ENCODE measurements at regions of chr13 and their contacts with region 1.

Region 1: GRCh38 chr13:20197361-20197834 is 4.7 kb upstream of the GJB2 start:
- DNase-seq: peak; percentile 23
- H3K4me3 Mint-ChIP-seq: no peak overlapping the region
- H3K27ac Mint-ChIP-seq: no peak overlapping the region
- H3K4me1 Mint-ChIP-seq: peaks cover 13% of the 10 kb centered on the region
- H3K27me3 Mint-ChIP-seq: peaks cover 37% of the 10 kb centered on the region

Region 2: DNA sequence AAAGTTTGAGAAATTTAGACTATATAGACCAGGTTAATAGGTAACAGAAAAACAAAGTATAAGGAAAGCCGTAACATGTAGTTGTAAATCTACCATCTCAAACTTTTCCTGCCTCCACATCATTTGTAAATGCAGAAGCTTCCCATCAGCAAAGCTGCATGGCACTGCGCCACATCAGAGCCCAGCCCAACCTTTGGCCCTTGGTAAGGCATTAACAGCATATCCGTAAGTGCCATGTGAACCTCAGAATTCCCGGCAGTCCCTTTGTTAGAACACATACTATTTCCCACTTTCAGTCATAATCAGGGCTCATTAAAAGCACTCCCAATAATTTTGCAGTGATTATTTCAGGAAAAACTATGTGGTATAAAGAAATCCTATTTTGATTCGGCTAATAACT is 512.4 kb before region 1 on chr13:
- CTCF ChIA-PET with region 1: no interaction called
- intact Hi-C with region 1: no loop called
- DNase-seq: no peak
- H3K4me3 Mint-ChIP-seq: no peak overlapping the region
- H3K27ac Mint-ChIP-seq: no peak overlapping the region
- H3K4me1 Mint-ChIP-seq: peaks cover 24% of the 10 kb centered on the region
- H3K27me3 Mint-ChIP-seq: no peaks in the 10 kb centered on the region

Region 3: GRCh38 chr13:20219577-20219976 is 22.2 kb after region 1 on chr13:
- CTCF ChIA-PET with region 1: interaction called, 10 read pairs
- intact Hi-C with region 1: loop called (anchors 2 kb)
- DNase-seq: no peak
- H3K4me3 Mint-ChIP-seq: peak overlapping the region; percentile 2
- H3K27ac Mint-ChIP-seq: peak overlapping the region; percentile 5
- H3K4me1 Mint-ChIP-seq: peaks cover 17% of the 10 kb centered on the region
- H3K27me3 Mint-ChIP-seq: no peaks in the 10 kb centered on the region

Region 4: DNA sequence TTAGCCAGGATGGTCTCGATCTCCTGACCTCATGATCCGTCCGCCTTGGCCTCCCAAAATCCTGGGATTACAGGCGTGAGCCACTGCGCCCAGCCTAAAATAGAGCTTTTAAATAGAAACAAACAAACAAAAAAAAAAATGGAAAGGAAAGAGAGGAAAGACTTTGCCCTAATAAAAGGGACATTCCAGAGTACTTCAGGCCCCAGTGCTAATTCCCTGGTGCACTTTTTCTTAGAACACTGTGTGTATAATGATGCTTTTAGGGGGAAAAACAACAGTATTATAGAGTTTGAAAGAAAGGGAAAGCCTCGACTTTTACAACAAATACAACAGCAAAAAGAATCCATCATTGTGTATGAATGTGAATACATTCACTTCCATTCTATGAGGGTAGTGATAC is 223.5 kb after region 1 on chr13:
- CTCF ChIA-PET with region 1: interaction called, 7 read pairs
- intact Hi-C with region 1: loop called (anchors 2 kb)
- DNase-seq: no peak
- H3K4me3 Mint-ChIP-seq: no peak overlapping the region
- H3K27ac Mint-ChIP-seq: peak overlapping the region; percentile 59
- H3K4me1 Mint-ChIP-seq: peaks cover 35% of the 10 kb centered on the region
- H3K27me3 Mint-ChIP-seq: no peaks in the 10 kb centered on the region

Region 5: GRCh38 chr13:20489185-20489820 is 291.9 kb after region 1 on chr13:
- CTCF ChIA-PET with region 1: interaction called, 20 read pairs
- intact Hi-C with region 1: loop called (anchors 1 kb)
- DNase-seq: peak; percentile 30
- H3K4me3 Mint-ChIP-seq: no peak overlapping the region
- H3K27ac Mint-ChIP-seq: no peak overlapping the region
- H3K4me1 Mint-ChIP-seq: no peaks in the 10 kb centered on the region
- H3K27me3 Mint-ChIP-seq: no peaks in the 10 kb centered on the region

Region 6: DNA sequence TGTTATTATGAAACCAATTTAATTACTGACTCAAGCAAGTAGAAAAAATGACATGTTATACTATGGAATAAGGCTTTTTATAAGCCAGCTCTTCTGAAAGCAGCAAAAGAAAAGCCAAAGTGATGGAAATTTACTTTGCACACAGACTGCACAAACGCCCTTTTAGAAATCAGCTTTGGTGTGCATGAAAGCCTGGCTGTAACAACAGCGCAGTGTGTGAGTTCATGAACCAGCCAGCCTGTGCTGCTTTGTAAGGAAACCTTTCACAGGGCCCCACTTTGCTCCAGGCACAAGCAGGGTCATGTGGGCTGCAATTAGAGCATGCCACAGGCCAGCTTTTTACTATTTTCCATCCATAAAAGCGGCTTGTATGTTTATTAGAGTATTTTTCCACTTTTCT is 355.9 kb after region 1 on chr13:
- CTCF ChIA-PET with region 1: no interaction called
- intact Hi-C with region 1: no loop called
- DNase-seq: no peak
- H3K4me3 Mint-ChIP-seq: no peak overlapping the region
- H3K27ac Mint-ChIP-seq: no peak overlapping the region
- H3K4me1 Mint-ChIP-seq: no peaks in the 10 kb centered on the region
- H3K27me3 Mint-ChIP-seq: no peaks in the 10 kb centered on the region

Region 7: DNA sequence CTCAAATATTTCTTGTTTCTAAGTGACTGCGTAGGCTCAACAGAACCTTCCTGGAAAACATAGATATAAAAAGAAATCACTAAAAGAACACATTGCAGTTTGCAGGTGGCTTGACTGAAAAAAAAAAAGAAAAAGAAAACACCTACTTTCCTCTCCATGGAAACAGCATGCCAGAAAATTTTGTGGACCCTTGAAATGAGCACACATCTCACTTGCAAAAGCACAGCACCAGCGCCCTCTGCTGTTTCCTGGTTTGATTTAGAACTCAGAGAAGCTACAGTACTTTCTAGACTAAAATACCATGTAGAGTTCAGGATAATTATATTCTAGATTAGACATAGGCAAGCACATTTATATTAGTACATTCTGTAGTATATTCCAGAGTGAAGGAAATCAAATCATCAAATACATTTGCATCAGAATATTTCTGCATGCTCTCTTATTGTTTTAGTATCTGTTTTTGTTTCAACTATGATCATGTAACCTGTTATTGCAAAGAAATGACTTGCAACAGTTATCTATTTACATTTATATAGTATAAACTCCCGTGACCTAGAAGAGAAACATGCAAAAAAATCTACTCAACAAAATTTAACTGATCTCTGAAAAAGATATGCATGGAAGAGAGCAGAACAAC is 727.5 kb after region 1 on chr13:
- CTCF ChIA-PET with region 1: interaction called, 5 read pairs
- intact Hi-C with region 1: loop called (anchors 1 kb)
- DNase-seq: peak; percentile 89
- H3K4me3 Mint-ChIP-seq: no peak overlapping the region
- H3K27ac Mint-ChIP-seq: no peak overlapping the region
- H3K4me1 Mint-ChIP-seq: no peaks in the 10 kb centered on the region
- H3K27me3 Mint-ChIP-seq: no peaks in the 10 kb centered on the region

Measured in activated naive CD4-positive, alpha-beta T cell treated with anti-CD3 and anti-CD28 coated beads for 36 hours (primary cell).